Caco-2 (cell line): ENCODE measurements at regions of chr10 and their contacts with region 1.

Region 1: DNA sequence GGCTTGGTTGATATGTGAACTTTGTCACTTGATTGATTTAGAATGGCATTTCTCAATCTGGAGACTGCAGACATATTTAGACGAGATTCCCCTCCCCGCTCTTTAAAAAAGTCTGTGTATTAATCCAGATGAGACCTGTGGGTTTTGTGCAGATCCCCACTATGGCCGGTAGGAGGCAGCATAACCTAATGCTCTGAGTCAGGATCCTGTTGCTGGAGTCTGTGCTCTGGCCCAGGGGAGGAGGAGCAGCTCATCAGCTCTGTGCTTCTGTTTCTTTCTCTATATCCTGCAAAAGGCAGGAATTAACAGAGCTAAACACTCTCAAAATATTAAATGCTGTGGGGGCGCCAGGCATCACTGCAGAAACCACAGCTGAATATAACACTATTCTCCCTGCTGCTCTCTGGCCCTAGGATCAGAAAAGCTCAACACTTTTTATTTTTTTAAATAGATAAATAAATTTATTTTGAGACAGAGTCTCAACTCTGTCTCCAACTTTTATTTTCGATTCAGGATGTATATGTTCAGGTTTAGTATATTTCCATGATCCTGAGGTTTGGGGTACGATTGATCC is 23.9 kb upstream of the SEPHS1 start:
- DNase-seq: peak; percentile 88 to 90
- H3K4me3 ChIP-seq: no peak overlapping the region
- H3K4me3 Mint-ChIP-seq: no peak overlapping the region
- H3K27ac Mint-ChIP-seq: no peak overlapping the region
- H3K4me1 ChIP-seq: peaks cover 10% of the 10 kb centered on the region
- H3K4me1 Mint-ChIP-seq: peaks cover 24% of the 10 kb centered on the region
- H3K27me3 ChIP-seq: no peaks in the 10 kb centered on the region
- H3K27me3 Mint-ChIP-seq: no peaks in the 10 kb centered on the region
- CTCF ChIP-seq: peak; percentile 99

Region 2: GRCh38 chr10:13139150-13139549 is 232.8 kb before region 1 on chr10:
- CTCF ChIA-PET with region 1: no interaction called
- POLR2A ChIA-PET with region 1: no interaction called
- intact Hi-C with region 1: no loop called
- DNase-seq: no peak
- H3K4me3 ChIP-seq: no peak overlapping the region
- H3K4me3 Mint-ChIP-seq: no peak overlapping the region
- H3K27ac Mint-ChIP-seq: no peak overlapping the region
- H3K4me1 ChIP-seq: no peaks in the 10 kb centered on the region
- H3K4me1 Mint-ChIP-seq: no peaks in the 10 kb centered on the region
- H3K27me3 ChIP-seq: no peaks in the 10 kb centered on the region
- H3K27me3 Mint-ChIP-seq: no peaks in the 10 kb centered on the region
- CTCF ChIP-seq: no peak

Region 3: DNA sequence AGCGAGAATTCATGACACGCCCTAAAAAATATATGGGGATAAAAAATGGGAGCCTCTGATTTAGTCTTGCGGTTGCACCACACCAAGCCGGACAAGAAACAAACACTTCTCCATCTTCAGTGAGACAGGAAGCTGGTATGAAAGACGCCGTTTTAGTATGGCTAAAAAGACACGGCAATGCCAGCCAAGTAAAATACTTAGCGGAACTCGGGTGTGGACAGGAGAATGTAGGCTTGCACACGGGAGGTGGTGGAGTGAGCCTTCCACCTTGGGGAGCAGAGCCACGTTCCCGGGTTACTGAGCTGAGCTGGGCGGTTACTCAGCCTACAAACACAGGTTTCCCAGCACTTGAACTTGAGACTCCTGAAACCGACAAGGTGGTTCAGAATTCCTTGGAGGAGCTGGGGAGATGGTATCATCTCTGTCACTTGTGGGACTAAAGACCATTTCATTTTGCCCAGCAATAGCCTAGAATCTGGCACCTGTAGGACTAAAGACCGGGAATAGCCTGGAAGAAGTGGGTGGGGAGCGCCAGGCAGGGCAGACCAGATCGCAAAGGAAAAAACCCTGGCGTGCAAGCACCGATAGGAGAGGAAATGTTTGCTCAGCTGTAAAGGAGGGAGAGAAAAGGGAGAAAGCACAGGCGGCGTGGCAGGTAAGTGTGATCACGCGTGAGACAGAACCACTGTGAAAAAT is 10.9 kb after region 1 on chr10:
- CTCF ChIA-PET with region 1: interaction called, 21 read pairs
- POLR2A ChIA-PET with region 1: interaction called, 3 read pairs
- intact Hi-C with region 1: loop called (anchors 1 kb)
- DNase-seq: peak; percentile 58 to 62
- H3K4me3 ChIP-seq: peak overlapping the region; percentile 40
- H3K4me3 Mint-ChIP-seq: peak overlapping the region; percentile 90
- H3K27ac Mint-ChIP-seq: peak overlapping the region; percentile 81
- H3K4me1 ChIP-seq: peaks cover 7% of the 10 kb centered on the region
- H3K4me1 Mint-ChIP-seq: peaks cover 7% of the 10 kb centered on the region
- H3K27me3 ChIP-seq: no peaks in the 10 kb centered on the region
- H3K27me3 Mint-ChIP-seq: no peaks in the 10 kb centered on the region
- CTCF ChIP-seq: no peak

Region 4: GRCh38 chr10:13414894-13415293 is 42.9 kb after region 1 on chr10:
- CTCF ChIA-PET with region 1: interaction called, 13 read pairs
- POLR2A ChIA-PET with region 1: no interaction called
- intact Hi-C with region 1: loop called (anchors 1 kb)
- DNase-seq: peak; percentile 82 to 87
- H3K4me3 ChIP-seq: no peak overlapping the region
- H3K4me3 Mint-ChIP-seq: no peak overlapping the region
- H3K27ac Mint-ChIP-seq: no peak overlapping the region
- H3K4me1 ChIP-seq: peaks cover 23% of the 10 kb centered on the region
- H3K4me1 Mint-ChIP-seq: peaks cover 20% of the 10 kb centered on the region
- H3K27me3 ChIP-seq: no peaks in the 10 kb centered on the region
- H3K27me3 Mint-ChIP-seq: no peaks in the 10 kb centered on the region
- CTCF ChIP-seq: peak; percentile 58 to 70

Region 5: GRCh38 chr10:13518076-13518692 is 146.2 kb after region 1 on chr10:
- CTCF ChIA-PET with region 1: no interaction called
- POLR2A ChIA-PET with region 1: no interaction called
- intact Hi-C with region 1: loop called (anchors 1 kb)
- DNase-seq: peak in 1 of 2 experiments; percentile 41
- H3K4me3 ChIP-seq: no peak overlapping the region
- H3K4me3 Mint-ChIP-seq: no peak overlapping the region
- H3K27ac Mint-ChIP-seq: no peak overlapping the region
- H3K4me1 ChIP-seq: peaks cover 9% of the 10 kb centered on the region
- H3K4me1 Mint-ChIP-seq: peaks cover 10% of the 10 kb centered on the region
- H3K27me3 ChIP-seq: no peaks in the 10 kb centered on the region
- H3K27me3 Mint-ChIP-seq: no peaks in the 10 kb centered on the region
- CTCF ChIP-seq: peak; percentile 17 to 70

Region 6: GRCh38 chr10:13586676-13587355 is 214.8 kb after region 1 on chr10 and contains the start of gene PRPF18:
- CTCF ChIA-PET with region 1: interaction called, 6 read pairs
- POLR2A ChIA-PET with region 1: no interaction called
- intact Hi-C with region 1: loop called (anchors 1 kb)
- DNase-seq: peak; percentile 96 to 97
- H3K4me3 ChIP-seq: peak within 1 kb of the TSS; percentile 82
- H3K4me3 Mint-ChIP-seq: peak within 1 kb of the TSS; percentile 95
- H3K27ac Mint-ChIP-seq: peak within 1 kb of the TSS; percentile 88
- H3K4me1 ChIP-seq: no peaks in the 10 kb centered on the region
- H3K4me1 Mint-ChIP-seq: no peaks in the 10 kb centered on the region
- H3K27me3 ChIP-seq: no peaks in the 10 kb centered on the region; the same call in 1 of the 2 replicates
- H3K27me3 Mint-ChIP-seq: peaks cover 5% of the 10 kb centered on the region
- CTCF ChIP-seq: peak; percentile 98 to 100
- total RNA-seq, gene PRPF18: 31.0 and 32.0 TPM in 2 replicates

Region 7: GRCh38 chr10:14126701-14127440 is 754.9 kb after region 1 on chr10:
- CTCF ChIA-PET with region 1: no interaction called
- POLR2A ChIA-PET with region 1: no interaction called
- intact Hi-C with region 1: no loop called
- DNase-seq: no peak
- H3K4me3 ChIP-seq: no peak overlapping the region
- H3K4me3 Mint-ChIP-seq: no peak overlapping the region
- H3K27ac Mint-ChIP-seq: no peak overlapping the region
- H3K4me1 ChIP-seq: no peaks in the 10 kb centered on the region
- H3K4me1 Mint-ChIP-seq: no peaks in the 10 kb centered on the region
- H3K27me3 ChIP-seq: no peaks in the 10 kb centered on the region
- H3K27me3 Mint-ChIP-seq: peaks cover 3% of the 10 kb centered on the region
- CTCF ChIP-seq: no peak